Dendritic cell treated with granulocyte-macrophage colony-stimulating factor and Interleukin-4, amounts not matched to agents 40 ng/mL and 50 ng/mL, for 4 days (primary cell): ENCODE measurements at regions of chr5 and their contacts with region 1.

Region 1: DNA sequence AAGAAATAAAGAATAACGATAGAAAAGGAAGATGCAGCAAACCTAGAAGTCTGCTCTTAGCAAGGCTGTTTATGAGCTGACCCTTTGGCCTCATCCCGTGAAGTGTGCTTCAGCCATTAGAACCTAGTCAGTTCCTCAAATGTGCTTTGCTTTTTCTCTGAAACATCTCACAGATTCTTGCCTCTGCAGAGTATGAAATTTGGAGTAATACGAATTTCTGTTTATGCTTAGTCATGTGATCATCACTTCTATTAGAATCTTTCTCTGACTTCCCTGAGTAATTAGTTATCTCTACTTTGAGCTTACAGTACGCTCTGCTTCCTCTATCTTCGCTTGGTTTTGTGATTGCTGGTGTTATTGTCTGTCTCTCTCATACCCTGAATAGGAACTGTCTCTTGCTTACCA is 11.3 kb downstream of the CYSTM1 start:
- H3K4me3 Mint-ChIP-seq: no peak overlapping the region
- H3K27ac Mint-ChIP-seq: peak overlapping the region; percentile 9
- H3K4me1 Mint-ChIP-seq: peaks cover 33% of the 10 kb centered on the region
- H3K27me3 Mint-ChIP-seq: no peaks in the 10 kb centered on the region

Region 2: GRCh38 chr5:140174465-140175366 is 11.6 kb before region 1 on chr5 and contains the start of gene CYSTM1:
- intact Hi-C with region 1: loop called (anchors 1 kb)
- H3K4me3 Mint-ChIP-seq: peak within 1 kb of the TSS; percentile 98
- H3K27ac Mint-ChIP-seq: peak within 1 kb of the TSS; percentile 97
- H3K4me1 Mint-ChIP-seq: peaks cover 35% of the 10 kb centered on the region
- H3K27me3 Mint-ChIP-seq: peaks cover 2% of the 10 kb centered on the region

Region 3: GRCh38 chr5:140509898-140510297 is 323.6 kb after region 1 on chr5:
- intact Hi-C with region 1: no loop called
- H3K4me3 Mint-ChIP-seq: no peak overlapping the region
- H3K27ac Mint-ChIP-seq: no peak overlapping the region
- H3K4me1 Mint-ChIP-seq: no peaks in the 10 kb centered on the region
- H3K27me3 Mint-ChIP-seq: no peaks in the 10 kb centered on the region